Activated CD4-positive, alpha-beta memory T cell treated with anti-CD3 and anti-CD28 coated beads for 36 hours (primary cell): ENCODE measurements at regions of chr3 and their contacts with region 1.

Region 1: GRCh38 chr3:107574650-107575049 is 51.9 kb downstream of the BBX start:
- DNase-seq: no peak
- H3K4me3 Mint-ChIP-seq: no peak overlapping the region
- H3K27ac Mint-ChIP-seq: no peak overlapping the region
- H3K4me1 Mint-ChIP-seq: peaks cover 30% of the 10 kb centered on the region
- H3K27me3 Mint-ChIP-seq: no peaks in the 10 kb centered on the region

Region 2: GRCh38 chr3:107598926-107599771 is 24.5 kb after region 1 on chr3:
- CTCF ChIA-PET with region 1: interaction called, 6 read pairs
- POLR2A ChIA-PET with region 1: no interaction called
- intact Hi-C with region 1: loop called (anchors 2 kb)
- DNase-seq: peak; percentile 64
- H3K4me3 Mint-ChIP-seq: peak overlapping the region; percentile 79
- H3K27ac Mint-ChIP-seq: peak overlapping the region; percentile 91
- H3K4me1 Mint-ChIP-seq: peaks cover 58% of the 10 kb centered on the region
- H3K27me3 Mint-ChIP-seq: no peaks in the 10 kb centered on the region

Region 3: GRCh38 chr3:107740992-107741896 is 166.6 kb after region 1 on chr3:
- CTCF ChIA-PET with region 1: interaction called, 20 read pairs
- POLR2A ChIA-PET with region 1: no interaction called
- intact Hi-C with region 1: loop called (anchors 5 kb)
- DNase-seq: no peak
- H3K4me3 Mint-ChIP-seq: no peak overlapping the region
- H3K27ac Mint-ChIP-seq: no peak overlapping the region
- H3K4me1 Mint-ChIP-seq: no peaks in the 10 kb centered on the region
- H3K27me3 Mint-ChIP-seq: no peaks in the 10 kb centered on the region